ENCODE measurements at regions of chr1 and their contacts with region 1.

Region 1: DNA sequence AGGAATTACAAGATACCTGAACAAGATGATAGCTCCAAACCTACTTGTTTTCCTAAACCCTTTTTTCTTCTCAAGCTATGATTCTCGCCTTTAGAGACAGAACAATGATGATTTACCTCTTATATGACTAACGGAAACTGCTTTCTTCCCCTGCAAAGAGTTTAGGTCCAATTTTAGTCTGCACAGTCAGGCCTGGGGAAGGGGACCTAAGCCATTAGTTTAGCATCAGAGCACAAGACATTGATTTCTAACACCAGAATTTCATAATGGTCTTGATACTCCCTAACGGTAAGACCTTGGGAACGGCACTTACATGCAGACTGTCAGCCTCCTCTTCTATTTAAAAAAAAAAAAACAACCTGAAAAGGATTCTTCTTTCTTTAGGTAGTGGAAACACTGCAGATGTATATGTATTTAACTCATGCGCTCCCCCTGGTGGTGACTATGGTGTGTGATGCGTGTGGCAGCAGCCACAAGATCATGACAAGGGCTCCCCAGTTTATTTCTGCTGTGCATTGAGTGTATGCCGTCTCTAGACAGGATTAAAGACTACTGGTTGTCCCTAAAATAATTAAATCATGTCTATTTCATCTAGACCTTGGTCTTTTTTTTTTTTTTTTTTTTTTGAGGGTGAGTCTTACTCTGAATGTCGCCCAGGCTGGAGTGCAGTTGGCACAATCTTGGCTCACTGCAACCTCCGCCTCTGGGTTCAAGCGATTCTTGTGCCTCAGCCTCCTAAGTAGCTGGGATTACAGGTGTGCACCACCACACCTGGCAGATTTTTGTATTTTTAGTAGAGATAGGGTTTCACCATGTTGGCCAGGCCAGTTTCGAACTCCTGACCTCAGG is 37.3 kb upstream of the TMEM222 start:
- DNase-seq: peak; percentile 83
- H3K4me3 Mint-ChIP-seq: no peak overlapping the region
- H3K27ac Mint-ChIP-seq: no peak overlapping the region
- H3K4me1 Mint-ChIP-seq: no peaks in the 10 kb centered on the region
- H3K27me3 Mint-ChIP-seq: no peaks in the 10 kb centered on the region
- CTCF ChIP-seq: peak; percentile 75

Region 2: DNA sequence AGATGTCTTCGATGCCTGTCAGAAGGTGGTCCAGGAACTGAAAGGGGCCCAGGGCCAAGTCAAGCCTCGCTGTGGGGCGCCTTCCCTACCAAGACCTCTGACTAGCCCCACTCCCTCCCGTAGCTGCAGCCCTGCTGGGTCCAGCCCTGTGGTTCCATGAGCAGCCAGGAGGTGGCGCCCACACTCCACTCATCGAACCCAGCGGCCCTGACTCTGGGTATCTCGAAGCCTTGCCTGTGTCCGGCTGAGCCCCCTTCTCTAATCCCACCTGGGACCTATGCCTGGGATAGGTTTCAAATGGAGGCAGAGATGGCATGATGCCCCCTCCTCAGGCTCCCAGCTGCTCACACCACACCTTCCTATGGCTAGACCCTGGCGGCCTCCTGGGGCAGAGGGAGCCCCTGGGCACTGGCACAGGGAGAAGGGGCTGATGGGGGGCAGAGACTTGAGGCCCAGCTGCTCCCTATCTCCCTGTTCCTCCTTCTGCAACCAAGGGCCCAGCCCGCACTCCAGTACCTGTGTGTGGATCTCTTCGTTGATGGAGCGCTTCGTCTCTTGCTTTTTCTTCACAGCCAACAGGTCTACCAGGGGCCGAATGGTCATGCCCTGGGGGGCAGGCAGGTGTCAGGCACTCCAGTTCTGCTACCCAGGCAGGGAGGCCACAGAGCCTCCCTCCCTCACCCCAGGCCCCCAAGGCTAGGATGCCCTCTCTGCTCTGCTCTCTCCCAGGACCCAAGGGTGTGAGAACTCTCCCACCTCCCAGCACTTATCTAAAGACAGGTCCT is 181.8 kb before region 1 on chr1:
- CTCF ChIA-PET with region 1: interaction called, 67 read pairs
- POLR2A ChIA-PET with region 1: interaction called, 7 read pairs
- intact Hi-C with region 1: loop called (anchors 1 kb)
- DNase-seq: peak; percentile 72
- H3K4me3 Mint-ChIP-seq: no peak overlapping the region
- H3K27ac Mint-ChIP-seq: no peak overlapping the region
- H3K4me1 Mint-ChIP-seq: peaks cover 19% of the 10 kb centered on the region
- H3K27me3 Mint-ChIP-seq: no peaks in the 10 kb centered on the region
- CTCF ChIP-seq: peak; percentile 95

Region 3: DNA sequence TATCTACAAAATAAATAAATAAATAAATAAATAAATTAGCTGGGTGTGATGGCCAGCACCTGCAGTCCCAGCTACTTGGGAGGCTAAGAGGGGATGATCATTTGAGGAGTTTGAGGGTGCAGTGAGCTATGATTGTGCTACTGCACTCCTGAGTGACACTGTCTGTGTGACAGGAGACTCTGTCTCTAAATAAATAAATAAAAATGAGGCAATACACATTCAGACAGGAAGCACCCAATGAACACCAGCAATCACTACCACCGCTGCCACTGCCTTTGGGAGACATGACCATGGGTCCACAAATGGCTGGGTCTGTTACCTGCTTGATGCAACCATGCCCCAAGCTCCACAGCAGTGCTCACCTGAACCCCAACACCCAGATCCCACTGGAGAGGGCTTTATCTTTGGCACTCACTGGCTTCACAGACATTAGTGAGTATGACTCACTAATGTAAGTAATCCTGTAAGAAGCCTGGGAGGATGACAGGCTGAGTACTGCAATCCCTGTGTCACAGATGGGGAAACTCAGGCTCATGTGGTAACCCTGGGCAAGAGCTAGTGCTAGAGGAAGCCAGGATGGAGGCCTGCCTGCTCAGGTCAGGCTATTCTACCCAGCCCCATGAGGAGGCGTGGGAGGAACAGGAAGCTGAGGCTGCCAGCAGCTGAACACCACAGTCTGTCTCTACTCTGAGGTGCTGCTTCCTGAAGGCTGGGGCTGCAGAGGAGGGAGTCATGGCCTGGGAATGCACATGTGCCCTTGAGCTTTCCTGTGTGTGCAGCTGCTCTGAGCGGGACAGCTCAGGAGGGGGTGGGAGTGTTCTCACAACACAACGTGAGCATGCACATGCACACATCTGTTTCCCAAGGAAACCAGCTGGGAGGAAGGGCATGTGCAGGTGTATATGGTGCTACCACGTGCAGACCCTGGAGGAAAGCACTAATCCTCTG is 172.7 kb before region 1 on chr1:
- CTCF ChIA-PET with region 1: interaction called, 67 read pairs
- POLR2A ChIA-PET with region 1: interaction called, 3 read pairs
- intact Hi-C with region 1: no loop called
- DNase-seq: peak; percentile 99
- H3K4me3 Mint-ChIP-seq: peak overlapping the region; percentile 46
- H3K27ac Mint-ChIP-seq: peak overlapping the region; percentile 74
- H3K4me1 Mint-ChIP-seq: peaks cover 31% of the 10 kb centered on the region
- H3K27me3 Mint-ChIP-seq: no peaks in the 10 kb centered on the region
- CTCF ChIP-seq: peak; percentile 20

Region 4: DNA sequence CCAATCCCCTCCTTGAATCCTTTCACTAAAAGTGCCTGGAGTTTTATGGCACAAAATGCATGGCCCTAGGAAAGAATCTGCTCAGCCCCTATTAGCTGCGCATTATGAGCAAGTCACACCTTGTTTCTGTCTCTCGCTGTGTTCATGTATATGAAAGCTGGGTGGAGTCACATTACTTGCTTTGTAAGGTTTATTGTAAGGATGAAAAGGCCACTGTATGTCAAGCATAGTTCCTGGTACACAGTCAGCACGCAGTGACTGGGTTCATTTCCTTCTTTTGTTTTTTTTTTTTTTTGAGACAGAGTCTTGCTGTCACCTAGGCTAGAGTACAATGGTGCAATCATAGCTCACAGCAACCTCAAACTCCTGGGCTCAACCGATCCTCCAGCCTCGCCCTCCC is 123.1 kb before region 1 on chr1:
- CTCF ChIA-PET with region 1: no interaction called
- POLR2A ChIA-PET with region 1: no interaction called
- intact Hi-C with region 1: no loop called
- DNase-seq: no peak
- H3K4me3 Mint-ChIP-seq: no peak overlapping the region
- H3K27ac Mint-ChIP-seq: no peak overlapping the region
- H3K4me1 Mint-ChIP-seq: no peaks in the 10 kb centered on the region
- H3K27me3 Mint-ChIP-seq: no peaks in the 10 kb centered on the region
- CTCF ChIP-seq: no peak

Region 5: DNA sequence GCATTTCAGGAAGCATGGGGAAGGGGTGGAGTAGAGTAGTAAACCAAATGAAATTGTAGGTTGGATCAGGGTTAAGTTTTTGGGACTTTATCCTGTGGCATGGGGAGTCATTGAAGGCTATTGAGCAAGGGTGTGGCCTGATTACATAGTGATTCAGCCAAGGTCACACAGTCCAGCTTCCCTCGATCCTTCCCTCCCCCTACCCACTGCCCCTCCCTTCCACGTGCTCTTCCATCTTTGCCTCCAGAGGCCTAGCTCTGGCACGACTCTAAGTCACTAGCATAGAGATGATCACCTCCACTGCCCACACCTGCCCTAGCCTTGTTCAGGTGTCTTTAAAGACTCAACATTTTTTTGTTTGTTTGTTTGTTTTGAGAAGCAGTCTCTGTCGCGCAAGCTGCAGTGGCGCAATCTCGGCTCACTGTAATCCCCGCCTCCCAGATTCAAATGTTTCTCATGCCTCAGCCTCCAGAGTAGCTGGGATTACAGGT is 92.6 kb before region 1 on chr1:
- CTCF ChIA-PET with region 1: interaction called, 39 read pairs
- POLR2A ChIA-PET with region 1: no interaction called
- intact Hi-C with region 1: no loop called
- DNase-seq: peak; percentile 58
- H3K4me3 Mint-ChIP-seq: peak overlapping the region; percentile 5
- H3K27ac Mint-ChIP-seq: peak overlapping the region; percentile 43
- H3K4me1 Mint-ChIP-seq: peaks cover 15% of the 10 kb centered on the region
- H3K27me3 Mint-ChIP-seq: no peaks in the 10 kb centered on the region
- CTCF ChIP-seq: no peak

Region 6: DNA sequence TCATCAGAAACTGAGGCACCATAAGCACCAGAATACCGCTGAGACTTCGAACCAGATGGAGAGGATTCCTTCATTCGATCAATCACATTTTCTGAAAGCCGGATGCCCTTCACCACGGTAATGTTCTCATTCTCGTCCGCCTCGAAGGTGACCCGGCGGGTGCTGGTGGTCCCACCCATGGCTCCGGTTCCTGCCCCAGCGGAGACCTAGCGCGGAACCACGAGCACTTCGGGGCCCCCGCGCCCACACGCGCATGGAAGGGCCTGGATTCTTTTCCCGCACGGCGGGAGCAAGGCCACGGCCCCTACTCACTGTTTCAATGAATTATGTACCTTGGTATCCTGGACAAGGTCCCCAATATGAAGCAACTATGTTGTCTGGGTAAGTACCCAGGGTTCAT is 83.4 kb before region 1 on chr1:
- CTCF ChIA-PET with region 1: interaction called, 39 read pairs
- POLR2A ChIA-PET with region 1: no interaction called
- intact Hi-C with region 1: loop called (anchors 1 kb)
- DNase-seq: no peak
- H3K4me3 Mint-ChIP-seq: no peak overlapping the region
- H3K27ac Mint-ChIP-seq: no peak overlapping the region
- H3K4me1 Mint-ChIP-seq: peaks cover 7% of the 10 kb centered on the region
- H3K27me3 Mint-ChIP-seq: no peaks in the 10 kb centered on the region
- CTCF ChIP-seq: no peak

Region 7: GRCh38 chr1:27603681-27604578 is 319.3 kb after region 1 on chr1 and contains the start of gene AHDC1:
- CTCF ChIA-PET with region 1: no interaction called
- POLR2A ChIA-PET with region 1: no interaction called
- intact Hi-C with region 1: no loop called
- DNase-seq: peak; percentile 91
- H3K4me3 Mint-ChIP-seq: peak within 1 kb of the TSS; percentile 90
- H3K27ac Mint-ChIP-seq: peak within 1 kb of the TSS; percentile 63
- H3K4me1 Mint-ChIP-seq: peaks cover 30% of the 10 kb centered on the region
- H3K27me3 Mint-ChIP-seq: no peaks in the 10 kb centered on the region
- CTCF ChIP-seq: no peak
- total RNA-seq, gene AHDC1: 18.4 and 25.2 TPM in 2 replicates

Measured in MCF 10A (cell line).